A673 (cell line): ENCODE measurements at regions of chr5 and their contacts with region 1.

Region 1: GRCh38 chr5:7927466-7928375 is 58.8 kb downstream of the MTRR start:
- DNase-seq: peak; percentile 64
- H3K4me3 ChIP-seq: no peak overlapping the region
- H3K27ac ChIP-seq: no peak overlapping the region
- H3K4me1 ChIP-seq: no peaks in the 10 kb centered on the region
- H3K27me3 ChIP-seq: no peaks in the 10 kb centered on the region
- CTCF ChIP-seq: peak; percentile 82

Region 2: GRCh38 chr5:9207817-9208418 is 1280.2 kb after region 1 on chr5:
- CTCF ChIA-PET with region 1: no interaction called
- POLR2A ChIA-PET with region 1: no interaction called
- intact Hi-C with region 1: loop called (anchors 1 kb)
- DNase-seq: peak; percentile 49
- H3K4me3 ChIP-seq: no peak overlapping the region
- H3K27ac ChIP-seq: no peak overlapping the region
- H3K4me1 ChIP-seq: no peaks in the 10 kb centered on the region
- H3K27me3 ChIP-seq: no peaks in the 10 kb centered on the region
- CTCF ChIP-seq: peak; percentile 58

Region 3: DNA sequence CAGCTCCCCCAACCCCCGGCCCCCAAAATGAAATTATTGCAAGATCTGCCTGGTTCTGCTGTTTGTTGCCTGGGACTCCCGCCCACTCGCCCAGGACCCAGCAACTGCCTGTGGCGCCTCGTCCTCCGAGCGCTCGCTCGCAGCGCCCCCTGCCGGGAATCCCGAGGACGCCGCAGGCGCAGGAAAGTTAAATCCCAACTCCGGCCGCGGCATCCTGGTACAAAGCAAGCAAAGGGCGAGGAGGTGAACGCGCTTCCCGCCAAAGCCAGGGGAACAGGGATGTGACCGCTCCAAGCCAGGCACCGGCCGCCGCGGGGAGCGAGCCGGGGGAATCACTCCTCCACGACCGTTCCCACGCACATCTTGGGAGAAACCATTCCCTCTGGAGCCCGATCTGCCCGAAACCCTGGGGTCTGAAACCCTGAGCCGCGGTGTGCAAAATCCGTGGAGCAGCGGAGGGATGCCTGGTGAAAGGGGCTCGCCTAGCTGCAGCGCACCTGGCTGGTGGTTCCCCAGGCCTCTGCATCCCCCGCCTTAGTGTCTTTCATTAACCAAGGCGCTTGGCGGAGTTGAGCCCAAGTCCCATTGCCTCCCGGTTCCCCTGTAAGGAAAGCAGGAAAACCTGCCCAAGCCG is 1616.9 kb after region 1 on chr5:
- CTCF ChIA-PET with region 1: no interaction called
- POLR2A ChIA-PET with region 1: no interaction called
- intact Hi-C with region 1: loop called (anchors 5 kb)
- DNase-seq: peak; percentile 79
- H3K4me3 ChIP-seq: peak overlapping the region; percentile 42
- H3K27ac ChIP-seq: no peak overlapping the region
- H3K4me1 ChIP-seq: peaks cover 11% of the 10 kb centered on the region
- H3K27me3 ChIP-seq: peaks cover 28% of the 10 kb centered on the region
- CTCF ChIP-seq: peak; percentile 96